ENCODE measurements at regions of chr17 and their contacts with region 1.

Region 1: GRCh38 chr17:63848834-63849700 is 6.6 kb upstream of the SMARCD2 start:
- DNase-seq: peak; percentile 96
- ATAC-seq: peak; percentile 97
- H3K4me3 Mint-ChIP-seq: peak overlapping the region; percentile 59
- H3K27ac Mint-ChIP-seq: peak overlapping the region; percentile 88
- H3K4me1 Mint-ChIP-seq: peaks cover 24% of the 10 kb centered on the region
- H3K27me3 Mint-ChIP-seq: peaks cover 11% of the 10 kb centered on the region

Region 2: GRCh38 chr17:63809970-63810369 is 39.1 kb before region 1 on chr17:
- CTCF ChIA-PET with region 1: no interaction called
- DNase-seq: no peak
- ATAC-seq: no peak
- H3K4me3 Mint-ChIP-seq: no peak overlapping the region
- H3K27ac Mint-ChIP-seq: no peak overlapping the region
- H3K4me1 Mint-ChIP-seq: peaks cover 5% of the 10 kb centered on the region
- H3K27me3 Mint-ChIP-seq: no peaks in the 10 kb centered on the region

Region 3: DNA sequence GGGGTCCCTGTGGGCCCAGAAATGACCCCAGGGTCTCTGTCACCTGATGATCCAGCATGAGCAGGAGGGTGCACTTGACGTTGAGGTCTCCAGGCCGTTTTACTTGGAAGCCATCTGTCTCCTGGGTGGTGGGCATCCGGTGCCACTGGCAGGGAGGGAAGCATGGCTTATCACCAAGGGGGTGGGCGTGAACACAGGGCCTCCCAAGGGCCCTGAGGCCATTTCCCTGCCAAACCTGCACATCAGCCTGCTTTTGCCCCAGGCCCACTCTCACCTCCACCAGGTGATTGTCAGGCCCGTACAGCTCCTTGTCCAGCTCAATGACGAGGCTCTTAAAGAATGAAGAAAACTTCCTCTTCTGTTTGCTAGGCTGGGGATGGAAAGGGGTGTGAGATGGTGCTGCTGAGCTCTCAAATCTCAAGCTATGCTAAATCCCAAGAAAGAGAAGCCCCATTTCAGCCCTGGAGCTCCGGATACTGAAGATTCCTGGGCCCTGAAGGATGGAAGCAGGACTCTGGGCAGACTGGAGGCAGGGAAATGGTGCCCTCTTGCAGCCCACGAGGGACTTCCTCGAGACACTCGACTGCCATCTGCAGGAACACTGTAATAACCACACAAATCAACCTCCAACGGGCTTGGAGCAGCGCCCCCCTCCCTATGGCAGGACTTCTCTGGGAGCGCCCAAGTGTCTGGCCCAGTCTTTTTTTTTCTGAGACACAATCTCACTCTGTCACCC is 14.5 kb before region 1 on chr17:
- CTCF ChIA-PET with region 1: interaction called, 15 read pairs
- DNase-seq: peak; percentile 77
- ATAC-seq: peak; percentile 84
- H3K4me3 Mint-ChIP-seq: no peak overlapping the region
- H3K27ac Mint-ChIP-seq: peak overlapping the region; percentile 59
- H3K4me1 Mint-ChIP-seq: peaks cover 44% of the 10 kb centered on the region
- H3K27me3 Mint-ChIP-seq: no peaks in the 10 kb centered on the region

Region 4: GRCh38 chr17:63859257-63859656 is 10.2 kb after region 1 on chr17:
- CTCF ChIA-PET with region 1: interaction called, 34 read pairs
- DNase-seq: no peak
- ATAC-seq: no peak
- H3K4me3 Mint-ChIP-seq: no peak overlapping the region
- H3K27ac Mint-ChIP-seq: no peak overlapping the region
- H3K4me1 Mint-ChIP-seq: no peaks in the 10 kb centered on the region
- H3K27me3 Mint-ChIP-seq: peaks cover 38% of the 10 kb centered on the region

Measured in activated CD8-positive, alpha-beta memory T cell treated with anti-CD3 and anti-CD28 coated beads, Interleukin-2, amount 10 ng/mL, durations not matched to agents 7 days and 5 days (primary cell).